Left ventricle myocardium inferior (tissue), 1 donor: ENCODE measurements at regions of chr17 and their contacts with region 1.

Region 1: GRCh38 chr17:2828397-2829038 is 32.3 kb downstream of the RAP1GAP2 start:
- DNase-seq: peak; percentile 70
- H3K4me3 ChIP-seq: no peak overlapping the region
- H3K27ac ChIP-seq: no peak overlapping the region
- H3K4me1 ChIP-seq: no peaks in the 10 kb centered on the region
- H3K27me3 ChIP-seq: peaks cover 25% of the 10 kb centered on the region
- CTCF ChIP-seq: peak; percentile 96

Region 2: DNA sequence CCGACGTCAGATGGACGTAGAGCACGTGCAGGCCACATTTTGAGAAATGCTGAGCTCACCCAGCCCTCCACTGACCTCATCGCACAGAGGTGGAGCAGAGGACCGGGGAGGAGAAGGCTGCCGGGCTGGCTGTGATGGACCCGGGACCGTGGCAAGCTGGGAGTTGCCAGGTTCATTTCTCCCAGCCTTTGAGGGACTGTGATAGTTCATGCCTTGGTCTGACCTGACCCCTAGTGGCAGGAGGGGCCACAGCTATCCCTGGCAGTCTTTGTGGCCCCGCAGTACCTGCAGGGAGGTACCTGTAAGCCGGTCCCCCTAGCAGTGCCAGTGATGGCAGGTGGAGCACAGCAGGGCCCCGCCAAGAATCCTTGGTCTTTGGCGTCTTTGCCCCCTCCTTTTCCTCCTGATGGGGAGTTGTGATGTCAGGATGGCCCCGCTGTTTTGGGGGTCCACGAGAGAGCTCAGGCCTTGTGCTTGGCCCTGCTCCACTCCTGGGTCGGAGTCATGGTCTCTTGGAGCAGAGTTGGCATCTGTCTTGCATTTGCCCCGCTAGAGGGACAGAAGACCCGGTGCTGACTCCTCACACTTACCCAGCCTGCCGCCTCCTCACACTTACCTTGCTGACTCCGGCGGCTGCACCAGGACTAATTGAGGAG is 184.5 kb after region 1 on chr17:
- intact Hi-C with region 1: loop called (anchors 2 kb)
- DNase-seq: peak; percentile 44
- H3K4me3 ChIP-seq: no peak overlapping the region
- H3K27ac ChIP-seq: no peak overlapping the region
- H3K4me1 ChIP-seq: peaks cover 6% of the 10 kb centered on the region
- H3K27me3 ChIP-seq: no peaks in the 10 kb centered on the region
- CTCF ChIP-seq: peak; percentile 89